Activated CD4-positive, alpha-beta memory T cell treated with anti-CD3 and anti-CD28 coated beads, Interleukin-2, amount 10 ng/mL, durations not matched to agents 7 days and 5 days (primary cell): ENCODE measurements at regions of chr2 and their contacts with region 1.

Region 1: GRCh38 chr2:203238704-203239526 is at the start of gene CYP20A1:
- DNase-seq: peak; percentile 97
- H3K4me3 Mint-ChIP-seq: peak within 1 kb of the TSS; percentile 100
- H3K27ac Mint-ChIP-seq: peak within 1 kb of the TSS; percentile 99
- H3K4me1 Mint-ChIP-seq: peaks cover 37% of the 10 kb centered on the region
- H3K27me3 Mint-ChIP-seq: no peaks in the 10 kb centered on the region
- total RNA-seq, gene CYP20A1: 18.9 to 21.6 TPM

Region 2: DNA sequence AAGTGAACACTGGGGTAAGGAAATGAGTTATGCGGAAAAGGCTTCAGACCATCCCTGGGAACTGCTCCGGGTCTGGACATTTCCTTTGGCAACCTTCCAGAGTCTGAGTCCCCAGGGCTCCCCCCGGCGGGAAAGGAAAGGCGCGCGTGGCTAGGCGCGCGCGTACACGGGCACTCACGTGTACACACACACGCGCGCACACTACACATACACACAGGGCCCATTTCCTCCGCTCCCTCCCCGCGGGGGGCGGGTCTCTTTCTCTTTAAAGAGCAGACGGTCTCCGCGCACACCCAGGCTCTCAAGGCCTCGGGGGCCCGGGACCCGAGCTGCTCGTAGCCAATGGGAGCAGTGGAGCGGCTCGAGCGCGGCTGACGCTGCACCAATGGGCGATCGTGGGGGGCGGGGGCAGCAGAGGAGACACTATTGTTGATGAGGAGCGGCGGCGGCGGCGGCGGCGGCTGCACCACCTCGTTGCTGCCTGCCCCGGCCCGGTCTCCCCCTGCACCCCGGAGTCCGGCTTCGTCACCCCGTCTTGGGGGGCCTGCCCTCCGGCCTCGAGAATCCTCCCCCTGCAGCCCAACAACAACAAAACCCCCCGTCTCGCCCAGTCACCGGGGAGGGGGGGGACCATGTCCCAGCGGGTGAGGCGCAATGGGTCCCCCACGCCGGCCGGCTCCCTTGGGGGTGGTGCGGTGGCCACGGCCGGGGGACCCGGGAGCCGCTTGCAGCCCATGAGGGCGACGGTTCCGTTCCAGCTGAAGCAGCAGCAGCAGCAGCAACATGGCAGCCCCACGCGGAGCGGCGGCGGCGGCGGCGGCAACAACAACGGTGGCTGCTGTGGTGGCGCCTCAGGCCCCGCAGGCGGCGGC is 604.1 kb before region 1 on chr2 and contains the start of gene FAM117B:
- CTCF ChIA-PET with region 1: interaction called, 4 read pairs
- POLR2A ChIA-PET with region 1: interaction called, 10 read pairs
- DNase-seq: peak; percentile 98
- H3K4me3 Mint-ChIP-seq: peak within 1 kb of the TSS; percentile 92
- H3K27ac Mint-ChIP-seq: peak within 1 kb of the TSS; percentile 79
- H3K4me1 Mint-ChIP-seq: peaks cover 40% of the 10 kb centered on the region
- H3K27me3 Mint-ChIP-seq: no peaks in the 10 kb centered on the region
- total RNA-seq, gene FAM117B: 4.3 to 5.2 TPM

Region 3: DNA sequence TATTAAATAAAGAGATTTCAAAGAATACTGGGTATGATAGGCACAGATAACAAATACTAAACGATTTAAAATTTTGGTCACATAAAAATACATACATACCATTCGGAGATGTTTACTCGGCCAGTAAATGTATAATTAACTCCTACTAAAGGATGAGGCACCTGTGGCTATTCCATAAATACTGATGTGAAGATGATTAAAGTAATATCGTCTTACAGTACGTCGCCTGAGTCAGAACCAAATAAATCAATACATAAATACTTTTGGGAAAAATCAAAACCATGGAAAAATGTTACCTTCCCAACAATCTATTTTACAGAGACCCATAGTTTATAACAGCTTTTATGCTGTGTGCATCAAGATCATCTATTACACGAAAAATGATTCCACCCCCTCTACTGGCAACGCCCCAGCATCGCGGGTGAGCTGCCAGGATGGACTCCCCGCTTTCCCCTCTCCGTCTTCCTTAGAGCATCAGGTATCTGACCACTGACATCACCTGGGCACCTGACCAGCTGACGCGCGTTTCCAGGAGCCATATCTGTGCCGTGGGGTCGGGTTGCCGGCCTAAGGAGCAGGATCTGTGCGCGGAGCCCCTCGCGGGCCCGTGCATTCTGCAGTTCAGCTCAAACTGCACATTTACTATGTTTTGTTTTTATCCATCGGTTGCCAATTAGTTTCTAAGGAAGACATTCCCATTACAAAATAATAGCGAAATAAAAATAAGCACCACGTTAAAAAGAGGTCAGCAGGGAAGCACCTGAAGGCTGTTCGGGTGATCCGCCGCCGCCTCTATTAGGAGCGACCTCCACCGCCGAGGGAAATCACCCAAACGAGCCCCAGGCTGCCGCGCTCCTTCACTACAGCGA is 368.2 kb before region 1 on chr2:
- CTCF ChIA-PET with region 1: interaction called, 3 read pairs
- POLR2A ChIA-PET with region 1: interaction called, 16 read pairs
- DNase-seq: peak; percentile 69
- H3K4me3 Mint-ChIP-seq: peak overlapping the region; percentile 81
- H3K27ac Mint-ChIP-seq: peak overlapping the region; percentile 47
- H3K4me1 Mint-ChIP-seq: peaks cover 12% of the 10 kb centered on the region
- H3K27me3 Mint-ChIP-seq: no peaks in the 10 kb centered on the region

Region 4: GRCh38 chr2:202911512-202912341 is 327.2 kb before region 1 on chr2 and contains the starts of genes CARF and WDR12:
- CTCF ChIA-PET with region 1: no interaction called
- POLR2A ChIA-PET with region 1: interaction called, 25 read pairs
- DNase-seq: peak; percentile 93
- H3K4me3 Mint-ChIP-seq: peak within 1 kb of the TSS; percentile 91
- H3K27ac Mint-ChIP-seq: peak within 1 kb of the TSS; percentile 95
- H3K4me1 Mint-ChIP-seq: peaks cover 34% of the 10 kb centered on the region
- H3K27me3 Mint-ChIP-seq: no peaks in the 10 kb centered on the region
- total RNA-seq, gene CARF: 11.9 to 12.3 TPM
- total RNA-seq, gene WDR12: 41.3 to 42.1 TPM

Region 5: GRCh38 chr2:203122301-203122986 is 116.5 kb before region 1 on chr2:
- CTCF ChIA-PET with region 1: no interaction called
- POLR2A ChIA-PET with region 1: no interaction called
- DNase-seq: no peak
- H3K4me3 Mint-ChIP-seq: no peak overlapping the region
- H3K27ac Mint-ChIP-seq: no peak overlapping the region
- H3K4me1 Mint-ChIP-seq: no peaks in the 10 kb centered on the region
- H3K27me3 Mint-ChIP-seq: no peaks in the 10 kb centered on the region

Region 6: GRCh38 chr2:203225423-203226039 is 13.4 kb before region 1 on chr2:
- CTCF ChIA-PET with region 1: interaction called, 31 read pairs
- POLR2A ChIA-PET with region 1: interaction called, 13 read pairs
- DNase-seq: peak; percentile 40
- H3K4me3 Mint-ChIP-seq: no peak overlapping the region
- H3K27ac Mint-ChIP-seq: no peak overlapping the region
- H3K4me1 Mint-ChIP-seq: no peaks in the 10 kb centered on the region
- H3K27me3 Mint-ChIP-seq: no peaks in the 10 kb centered on the region

Region 7: GRCh38 chr2:203327901-203328759 is 89.2 kb after region 1 on chr2 and contains the start of gene ABI2:
- CTCF ChIA-PET with region 1: no interaction called
- POLR2A ChIA-PET with region 1: interaction called, 22 read pairs
- DNase-seq: peak; percentile 62
- H3K4me3 Mint-ChIP-seq: peak within 1 kb of the TSS; percentile 81
- H3K27ac Mint-ChIP-seq: no peak within 1 kb of the TSS
- H3K4me1 Mint-ChIP-seq: peaks cover 28% of the 10 kb centered on the region
- H3K27me3 Mint-ChIP-seq: no peaks in the 10 kb centered on the region
- total RNA-seq, gene ABI2: 30.6 to 32.3 TPM

Region 8: GRCh38 chr2:203706403-203706802 is 467.5 kb after region 1 on chr2 and contains the start of gene CD28:
- CTCF ChIA-PET with region 1: no interaction called
- POLR2A ChIA-PET with region 1: interaction called, 12 read pairs
- DNase-seq: peak; percentile 95
- H3K4me3 Mint-ChIP-seq: peak within 1 kb of the TSS; percentile 90
- H3K27ac Mint-ChIP-seq: peak within 1 kb of the TSS; percentile 97
- H3K4me1 Mint-ChIP-seq: peaks cover 46% of the 10 kb centered on the region
- H3K27me3 Mint-ChIP-seq: no peaks in the 10 kb centered on the region
- total RNA-seq, gene CD28: 194 to 205 TPM